WTC11 (cell line): ENCODE measurements at regions of chr19 and their contacts with region 1.

Region 1: DNA sequence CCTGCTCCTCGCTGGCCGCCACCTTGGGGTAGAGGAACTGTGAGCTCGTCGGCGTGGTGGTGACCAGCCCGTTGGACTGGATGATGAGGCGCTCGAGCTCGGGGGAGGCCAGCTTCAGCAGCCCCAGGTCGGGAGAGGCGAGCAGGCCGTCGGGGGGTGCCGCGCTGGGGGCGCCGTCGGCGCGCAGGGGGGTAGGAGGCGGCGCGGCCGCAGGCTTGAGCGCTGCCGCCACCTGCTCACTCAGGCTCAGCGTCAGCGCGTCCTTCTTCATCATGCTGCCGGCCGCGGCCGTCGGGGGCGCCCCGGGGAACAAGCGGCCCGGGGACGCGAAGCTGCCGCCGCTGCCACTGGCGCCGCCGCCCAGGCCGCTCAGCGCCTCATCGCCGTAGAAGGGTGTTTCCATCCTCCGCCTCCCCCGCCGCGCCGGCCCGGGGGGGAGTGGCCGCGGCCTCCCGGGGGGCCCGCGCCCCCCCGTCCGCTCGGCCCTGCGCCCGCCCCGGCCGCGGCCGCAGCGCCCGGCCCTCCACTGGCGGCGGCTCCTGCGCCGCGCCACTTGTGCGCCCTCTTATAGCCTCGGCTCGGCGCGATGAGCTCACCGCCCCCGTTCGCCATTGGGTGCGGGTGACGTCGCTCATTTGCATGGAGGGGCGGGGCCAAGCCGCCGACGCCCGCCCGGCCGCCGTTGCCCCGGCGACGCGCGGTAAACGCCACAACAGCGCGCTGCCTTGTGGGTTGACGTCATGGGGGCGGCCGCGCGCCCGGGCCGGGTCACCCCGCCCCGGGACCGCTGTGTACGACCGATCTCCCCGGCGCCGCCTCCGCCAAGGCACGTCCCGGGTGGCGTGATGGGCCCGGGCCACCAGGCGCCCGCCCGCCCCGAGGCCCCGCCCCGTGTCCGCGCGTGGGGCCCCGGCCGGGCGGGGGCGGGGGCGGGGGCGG is at the start of gene JUND:
- DNase-seq: peak; percentile 94
- ATAC-seq: peak; percentile 63
- H3K4me3 Mint-ChIP-seq: peak within 1 kb of the TSS; percentile 96
- H3K27ac Mint-ChIP-seq: peak within 1 kb of the TSS; percentile 98
- H3K4me1 Mint-ChIP-seq: peaks cover 31% of the 10 kb centered on the region
- H3K27me3 Mint-ChIP-seq: peaks cover 4% of the 10 kb centered on the region
- CTCF ChIP-seq: no peak
- total RNA-seq, gene JUND: 121 to 137 TPM (median 133 TPM) in 3 replicates

Region 2: DNA sequence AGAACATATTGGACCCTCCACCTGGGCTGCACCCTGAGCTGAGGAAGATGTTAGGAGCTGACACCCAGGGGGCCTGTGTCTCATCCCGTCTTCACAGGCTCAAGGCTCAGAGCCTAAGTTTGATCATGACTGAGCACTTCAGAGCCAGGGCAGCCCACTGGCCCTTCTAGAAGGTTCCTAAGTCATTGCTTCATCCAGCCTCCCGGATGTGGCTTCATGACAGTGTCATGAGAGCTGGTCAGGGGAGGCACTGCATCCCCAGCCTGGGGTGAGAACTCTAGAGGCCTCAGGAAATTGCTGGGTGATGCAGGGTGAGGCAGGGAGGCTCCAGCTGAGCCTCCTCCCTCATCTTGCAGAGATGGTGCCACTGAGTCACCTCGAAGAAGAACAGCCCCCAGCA is 153.3 kb before region 1 on chr19:
- CTCF ChIA-PET with region 1: no interaction called
- POLR2A ChIA-PET with region 1: no interaction called
- DNase-seq: no peak
- ATAC-seq: no peak
- H3K4me3 Mint-ChIP-seq: no peak overlapping the region
- H3K27ac Mint-ChIP-seq: no peak overlapping the region
- H3K4me1 Mint-ChIP-seq: no peaks in the 10 kb centered on the region
- H3K27me3 Mint-ChIP-seq: no peaks in the 10 kb centered on the region
- CTCF ChIP-seq: no peak

Region 3: GRCh38 chr19:18224525-18225354 is 56.6 kb before region 1 on chr19:
- CTCF ChIA-PET with region 1: interaction called, 57 read pairs
- POLR2A ChIA-PET with region 1: interaction called, 26 read pairs
- DNase-seq: peak; percentile 100
- ATAC-seq: peak; percentile 91
- H3K4me3 Mint-ChIP-seq: peak overlapping the region; percentile 92
- H3K27ac Mint-ChIP-seq: peak overlapping the region; percentile 100
- H3K4me1 Mint-ChIP-seq: peaks cover 30% of the 10 kb centered on the region
- H3K27me3 Mint-ChIP-seq: peaks cover 42% of the 10 kb centered on the region
- CTCF ChIP-seq: no peak

Region 4: GRCh38 chr19:18291590-18292461 is 10.5 kb after region 1 on chr19:
- CTCF ChIA-PET with region 1: interaction called, 102 read pairs
- POLR2A ChIA-PET with region 1: interaction called, 200 read pairs
- DNase-seq: peak; percentile 73
- ATAC-seq: peak; percentile 14
- H3K4me3 Mint-ChIP-seq: peak overlapping the region; percentile 83
- H3K27ac Mint-ChIP-seq: peak overlapping the region; percentile 99
- H3K4me1 Mint-ChIP-seq: peaks cover 48% of the 10 kb centered on the region
- H3K27me3 Mint-ChIP-seq: peaks cover 3% of the 10 kb centered on the region; the same call in 1 of the 2 replicates
- CTCF ChIP-seq: no peak

Region 5: DNA sequence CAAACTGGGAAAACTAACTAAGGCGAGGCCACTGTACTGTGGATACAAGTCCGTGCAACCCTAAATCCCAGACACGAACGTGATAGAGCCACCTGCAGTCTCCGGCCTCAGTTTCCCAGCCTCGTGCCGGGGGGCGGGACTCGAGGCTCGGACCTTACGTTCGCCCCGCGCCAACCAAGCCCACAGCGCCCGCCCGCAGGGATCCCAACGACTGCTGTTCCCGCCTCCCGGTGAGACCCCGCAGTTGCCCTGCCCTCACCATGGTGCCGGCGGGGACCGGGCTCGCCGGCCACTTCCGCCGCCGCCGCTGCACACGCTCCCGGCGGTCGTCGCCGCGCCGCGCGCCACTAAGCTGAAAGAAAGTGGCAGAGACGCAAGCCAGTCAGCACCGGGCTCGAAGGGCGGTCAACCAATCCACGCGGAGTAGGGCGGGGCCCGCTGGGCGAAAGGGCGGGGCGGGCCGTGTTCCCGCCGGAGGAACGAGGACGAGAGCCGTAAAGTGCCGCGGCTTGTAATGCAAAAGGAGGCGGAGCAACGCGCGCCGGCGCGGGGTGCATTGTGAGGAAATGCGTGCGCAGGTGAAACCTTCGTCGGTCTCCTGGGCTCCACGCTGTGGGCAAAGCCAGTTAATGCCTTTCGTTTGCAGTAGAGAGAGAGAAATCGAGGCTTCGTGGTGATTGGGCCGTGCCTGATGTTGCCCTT is 41.6 kb after region 1 on chr19 and contains the start of gene LSM4:
- CTCF ChIA-PET with region 1: interaction called, 240 read pairs
- POLR2A ChIA-PET with region 1: interaction called, 74 read pairs
- DNase-seq: peak; percentile 100
- ATAC-seq: peak; percentile 93
- H3K4me3 Mint-ChIP-seq: peak within 1 kb of the TSS; percentile 86
- H3K27ac Mint-ChIP-seq: peak within 1 kb of the TSS; percentile 100
- H3K4me1 Mint-ChIP-seq: peaks cover 42% of the 10 kb centered on the region
- H3K27me3 Mint-ChIP-seq: no peaks in the 10 kb centered on the region; the same call in 1 of the 2 replicates
- CTCF ChIP-seq: no peak
- total RNA-seq, gene LSM4: 373 to 434 TPM (median 409 TPM) in 3 replicates

Region 6: GRCh38 chr19:18340190-18340989 is 59.0 kb after region 1 on chr19 and contains the start of gene PGPEP1:
- CTCF ChIA-PET with region 1: interaction called, 61 read pairs
- POLR2A ChIA-PET with region 1: interaction called, 18 read pairs
- DNase-seq: peak; percentile 81
- ATAC-seq: peak; percentile 44
- H3K4me3 Mint-ChIP-seq: peak within 1 kb of the TSS; percentile 79
- H3K27ac Mint-ChIP-seq: peak within 1 kb of the TSS; percentile 96; the same call in 1 of the 2 replicates
- H3K4me1 Mint-ChIP-seq: peaks cover 43% of the 10 kb centered on the region
- H3K27me3 Mint-ChIP-seq: no peaks in the 10 kb centered on the region
- CTCF ChIP-seq: no peak
- total RNA-seq, gene PGPEP1: 39.2 to 68.1 TPM (median 40.8 TPM) in 3 replicates

Region 7: GRCh38 chr19:18388100-18388959 is 107.0 kb after region 1 on chr19:
- CTCF ChIA-PET with region 1: interaction called, 63 read pairs
- POLR2A ChIA-PET with region 1: interaction called, 28 read pairs
- DNase-seq: peak; percentile 90
- ATAC-seq: peak; percentile 69
- H3K4me3 Mint-ChIP-seq: peak overlapping the region; percentile 73
- H3K27ac Mint-ChIP-seq: no peak overlapping the region
- H3K4me1 Mint-ChIP-seq: peaks cover 29% of the 10 kb centered on the region
- H3K27me3 Mint-ChIP-seq: peaks cover 32% of the 10 kb centered on the region
- CTCF ChIP-seq: peak; percentile 100